ENCODE measurements at regions of chr1 and their contacts with region 1.

Region 1: GRCh38 chr1:88973520-88974137 is 18.8 kb downstream of the KYAT3 start:
- DNase-seq: peak; percentile 37
- H3K4me3 Mint-ChIP-seq: no peak overlapping the region
- H3K27ac Mint-ChIP-seq: no peak overlapping the region
- H3K4me1 Mint-ChIP-seq: peaks cover 27% of the 10 kb centered on the region
- H3K27me3 Mint-ChIP-seq: no peaks in the 10 kb centered on the region

Region 2: GRCh38 chr1:88983791-88984559 is 10.3 kb after region 1 on chr1:
- CTCF ChIA-PET with region 1: interaction called, 14 read pairs
- POLR2A ChIA-PET with region 1: no interaction called
- DNase-seq: peak; percentile 45
- H3K4me3 Mint-ChIP-seq: peak overlapping the region; percentile 27
- H3K27ac Mint-ChIP-seq: peak overlapping the region; percentile 72
- H3K4me1 Mint-ChIP-seq: peaks cover 82% of the 10 kb centered on the region
- H3K27me3 Mint-ChIP-seq: no peaks in the 10 kb centered on the region

Region 3: GRCh38 chr1:89104687-89105086 is 131.1 kb after region 1 on chr1:
- CTCF ChIA-PET with region 1: no interaction called
- POLR2A ChIA-PET with region 1: no interaction called
- DNase-seq: no peak
- H3K4me3 Mint-ChIP-seq: no peak overlapping the region
- H3K27ac Mint-ChIP-seq: no peak overlapping the region
- H3K4me1 Mint-ChIP-seq: peaks cover 4% of the 10 kb centered on the region
- H3K27me3 Mint-ChIP-seq: no peaks in the 10 kb centered on the region

Measured in activated CD4-positive, alpha-beta T cell treated with anti-CD3 and anti-CD28 coated beads, Interleukin-2, amount 10 ng/mL, durations not matched to agents 7 days and 5 days (primary cell).